ENCODE measurements at regions of chr1 and their contacts with region 1.

Region 1: DNA sequence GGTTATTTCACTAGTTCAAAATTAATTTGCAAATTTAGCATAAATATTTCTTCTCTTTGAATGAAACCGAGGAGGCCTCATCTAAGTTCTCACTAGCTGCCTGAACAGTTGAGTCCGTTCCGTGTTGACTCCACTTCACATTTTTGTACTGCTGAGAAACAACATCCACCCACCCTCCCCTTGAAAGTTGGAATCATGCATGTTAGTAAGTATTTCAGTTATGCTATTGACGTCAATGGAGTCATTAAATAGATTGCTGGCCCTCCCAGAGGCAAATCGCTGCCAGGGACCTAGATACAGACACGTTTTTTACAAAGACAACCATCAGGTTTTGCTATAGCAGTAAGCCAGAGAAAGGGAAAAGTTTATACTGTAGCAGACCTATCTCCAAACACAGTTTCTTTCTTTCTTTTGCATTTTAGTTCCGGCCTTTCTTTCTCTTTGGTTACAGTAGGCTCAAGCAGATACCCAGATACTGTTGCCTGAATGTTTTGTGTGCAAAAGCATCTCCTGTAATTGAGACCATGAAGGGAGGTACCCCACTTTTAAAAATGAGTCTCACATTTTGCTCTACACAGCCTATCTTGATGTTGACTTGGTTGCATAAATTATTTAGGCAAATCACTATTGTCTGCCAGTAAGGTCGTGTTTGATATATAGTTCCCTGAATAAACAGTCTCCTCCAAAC is 262.6 kb upstream of the SGIP1 start:
- DNase-seq: peak; percentile 82 to 84
- ATAC-seq: peak; percentile 95
- H3K4me3 ChIP-seq: no peak overlapping the region
- H3K27ac ChIP-seq: peak overlapping the region; percentile 58 to 59
- H3K4me1 ChIP-seq: peaks cover 0 to 2% of the 10 kb centered on the region in 2 donors
- H3K27me3 ChIP-seq: no peaks in the 10 kb centered on the region

Region 2: DNA sequence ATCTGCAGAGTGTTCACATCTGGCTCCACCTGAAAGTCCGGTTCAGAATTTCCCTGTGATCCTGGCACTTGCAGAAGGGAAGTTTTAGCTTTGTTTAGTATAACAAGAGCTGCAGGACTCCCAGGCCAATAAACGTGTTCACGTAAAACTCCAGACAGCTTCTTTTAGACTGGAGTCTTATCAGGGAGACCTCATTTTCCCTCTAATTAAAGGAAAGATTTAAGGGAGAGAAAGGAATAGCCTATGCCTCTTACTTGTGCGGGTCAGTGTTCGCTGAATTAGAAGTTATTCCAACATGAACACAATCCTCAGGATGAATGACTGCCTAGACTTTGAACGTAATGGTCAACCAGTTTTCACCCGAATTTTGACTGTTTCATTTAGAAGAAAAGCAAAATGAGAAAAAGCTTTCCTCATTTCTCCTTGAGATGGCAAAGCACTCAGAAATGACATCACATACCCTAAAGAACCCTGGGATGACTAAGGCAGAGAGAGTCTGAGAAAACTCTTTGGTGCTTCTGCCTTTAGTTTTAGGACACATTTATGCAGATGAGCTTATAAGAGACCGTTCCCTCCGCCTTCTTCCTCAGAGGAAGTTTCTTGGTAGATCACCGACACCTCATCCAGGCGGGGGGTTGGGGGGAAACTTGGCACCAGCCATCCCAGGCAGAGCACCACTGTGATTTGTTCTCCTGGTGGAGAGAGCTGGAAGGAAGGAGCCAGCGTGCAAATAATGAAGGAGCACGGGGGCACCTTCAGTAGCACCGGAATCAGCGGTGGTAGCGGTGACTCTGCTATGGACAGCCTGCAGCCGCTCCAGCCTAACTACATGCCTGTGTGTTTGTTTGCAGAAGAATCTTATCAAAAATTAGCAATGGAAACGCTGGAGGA is 60.5 kb after region 1 on chr1:
- intact Hi-C with region 1: loop called (anchors 2 to 5 kb)
- DNase-seq: peak; percentile 83 to 86
- ATAC-seq: peak; percentile 78
- H3K4me3 ChIP-seq: peak overlapping the region; percentile 13 to 54
- H3K27ac ChIP-seq: peak overlapping the region; percentile 38 to 91
- H3K4me1 ChIP-seq: peaks cover 0 to 7% of the 10 kb centered on the region in 2 donors
- H3K27me3 ChIP-seq: no peaks in the 10 kb centered on the region